ENCODE measurements at regions of chr22 and their contacts with region 1.

Region 1: DNA sequence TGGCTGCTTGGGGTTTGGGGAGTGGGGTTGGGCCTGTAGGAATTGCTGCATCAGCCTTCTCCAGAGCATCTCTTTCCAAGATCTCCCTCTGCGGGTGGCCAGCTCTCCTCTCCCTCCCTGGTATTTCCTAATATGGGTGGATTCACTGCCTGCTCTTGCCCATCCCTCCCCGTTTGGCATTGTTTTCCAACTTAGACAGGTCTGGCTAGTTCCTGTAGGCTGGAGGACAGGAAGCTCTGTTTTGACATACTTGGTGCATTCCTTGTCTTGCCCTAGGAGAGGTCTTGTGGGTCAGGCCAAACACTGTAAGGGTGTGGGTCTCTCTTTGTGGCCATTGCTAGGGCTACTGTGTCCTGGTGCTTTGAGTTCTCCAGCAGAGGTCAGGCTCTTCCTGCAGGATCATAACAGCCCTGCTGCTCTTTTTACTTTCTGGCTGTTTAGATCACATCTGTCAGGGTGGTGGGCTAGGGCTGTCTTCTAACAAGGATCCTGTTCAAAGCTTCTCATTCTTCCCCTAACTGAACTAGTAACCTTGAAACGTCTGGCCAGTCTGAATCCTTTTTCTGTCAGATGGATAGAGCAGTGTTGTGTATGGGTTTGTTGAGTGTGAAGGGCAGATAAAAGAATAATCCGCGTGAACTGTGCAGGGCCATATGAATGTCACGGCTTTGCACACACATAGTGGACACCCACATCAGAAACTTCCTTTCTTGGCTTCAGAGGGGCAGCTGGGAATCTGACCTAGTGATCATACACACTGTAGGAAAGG is 18.3 kb upstream of the MICALL1 start:
- DNase-seq: no peak
- ATAC-seq: peak; percentile 34 to 68 (median 48)
- H3K4me3 ChIP-seq: no peak overlapping the region
- H3K27ac ChIP-seq: no peak overlapping the region
- H3K4me1 ChIP-seq: peaks cover 7 to 12% (median 9%) of the 10 kb centered on the region in 3 donors
- H3K27me3 ChIP-seq: no peaks in the 10 kb centered on the region
- CTCF ChIP-seq: no peak

Region 2: GRCh38 chr22:37734964-37735451 is 152.8 kb before region 1 on chr22:
- intact Hi-C with region 1: no loop called
- DNase-seq: peak in 4 of 6 donors; percentile 51 to 81 (median 65)
- ATAC-seq: peak; percentile 32 to 53 (median 48)
- H3K4me3 ChIP-seq: no peak overlapping the region
- H3K27ac ChIP-seq: no peak overlapping the region
- H3K4me1 ChIP-seq: peaks cover 6 to 13% (median 10%) of the 10 kb centered on the region in 3 donors
- H3K27me3 ChIP-seq: no peaks in the 10 kb centered on the region
- CTCF ChIP-seq: peak in 1 of 4 donors; percentile 33

Region 3: DNA sequence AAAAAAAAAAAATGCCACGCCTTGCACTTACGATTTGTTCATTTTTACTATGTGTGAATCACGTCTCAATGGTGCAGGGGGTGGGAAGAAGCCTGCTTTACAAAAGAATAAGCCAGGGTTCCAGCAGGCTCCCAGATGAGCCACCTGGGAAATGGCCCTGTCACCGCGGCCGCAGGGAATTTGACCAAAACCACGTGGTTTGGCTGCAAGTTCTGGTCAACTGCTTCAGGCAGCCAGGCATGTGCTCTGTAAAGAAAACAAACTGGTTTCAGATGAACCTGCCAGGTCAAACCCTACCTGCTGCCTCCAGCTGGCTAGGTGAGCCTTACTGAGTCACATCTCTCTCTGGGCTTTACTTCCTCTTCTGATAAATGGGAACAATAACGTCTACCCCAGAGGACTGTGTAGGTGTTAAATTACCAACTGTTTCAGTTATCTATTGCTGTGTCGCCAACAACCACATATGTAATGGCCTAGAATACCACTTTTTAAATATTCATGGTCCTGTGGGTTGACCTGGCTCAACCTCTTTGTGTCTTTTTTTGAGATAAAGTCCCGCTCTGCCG is 110.6 kb before region 1 on chr22:
- intact Hi-C with region 1: no loop called
- DNase-seq: peak; percentile 77 to 89 (median 86)
- ATAC-seq: peak; percentile 92 to 95 (median 93)
- H3K4me3 ChIP-seq: no peak overlapping the region
- H3K27ac ChIP-seq: peak overlapping the region; percentile 35 to 59 (median 50)
- H3K4me1 ChIP-seq: peaks cover 0 to 7% (median 4%) of the 10 kb centered on the region in 3 donors
- H3K27me3 ChIP-seq: no peaks in the 10 kb centered on the region
- CTCF ChIP-seq: no peak

Region 4: DNA sequence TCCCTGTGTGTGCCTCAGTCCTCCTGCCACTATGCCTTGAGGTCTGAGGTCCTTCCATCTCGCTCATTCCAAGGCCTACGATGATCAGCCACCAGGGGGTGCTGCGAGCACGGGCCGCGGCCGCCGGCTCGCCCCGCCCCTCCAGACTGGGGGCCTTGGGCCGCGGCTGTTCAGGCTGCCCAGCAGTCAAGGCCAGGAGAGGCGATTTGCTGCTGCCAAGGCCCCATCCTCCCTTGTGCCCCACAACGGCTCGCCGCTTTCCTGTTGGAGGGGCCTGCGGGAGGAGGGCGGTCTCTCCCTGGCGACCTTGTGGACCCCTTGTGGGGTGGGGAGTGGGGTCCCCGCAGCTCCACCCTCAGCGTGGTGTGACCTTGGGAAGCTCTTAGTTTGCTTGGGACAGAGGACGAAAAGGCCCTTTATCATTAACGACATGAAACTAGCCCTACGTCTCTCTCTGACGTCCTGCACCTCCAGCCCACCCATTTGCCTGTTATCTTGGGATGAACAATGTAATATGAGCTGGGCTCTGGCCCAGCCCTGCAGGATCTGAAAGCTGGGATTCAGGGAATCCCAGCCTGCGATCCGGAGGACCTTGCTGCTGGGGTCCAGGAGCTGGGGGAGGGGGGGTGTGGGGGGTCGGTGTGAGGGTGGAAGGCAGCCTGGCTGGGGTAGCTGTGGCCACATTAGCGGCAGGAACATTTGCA is 69.9 kb before region 1 on chr22:
- intact Hi-C with region 1: no loop called
- DNase-seq: peak; percentile 82 to 98 (median 92)
- ATAC-seq: peak; percentile 90 to 96 (median 94)
- H3K4me3 ChIP-seq: peak overlapping the region in 2 of 4 donors; percentile 25 to 44
- H3K27ac ChIP-seq: peak overlapping the region in 1 of 4 donors; percentile 36
- H3K4me1 ChIP-seq: peaks cover 3 to 14% (median 11%) of the 10 kb centered on the region in 3 donors
- H3K27me3 ChIP-seq: no peaks in the 10 kb centered on the region
- CTCF ChIP-seq: peak; percentile 94 to 97 (median 96)

Region 5: DNA sequence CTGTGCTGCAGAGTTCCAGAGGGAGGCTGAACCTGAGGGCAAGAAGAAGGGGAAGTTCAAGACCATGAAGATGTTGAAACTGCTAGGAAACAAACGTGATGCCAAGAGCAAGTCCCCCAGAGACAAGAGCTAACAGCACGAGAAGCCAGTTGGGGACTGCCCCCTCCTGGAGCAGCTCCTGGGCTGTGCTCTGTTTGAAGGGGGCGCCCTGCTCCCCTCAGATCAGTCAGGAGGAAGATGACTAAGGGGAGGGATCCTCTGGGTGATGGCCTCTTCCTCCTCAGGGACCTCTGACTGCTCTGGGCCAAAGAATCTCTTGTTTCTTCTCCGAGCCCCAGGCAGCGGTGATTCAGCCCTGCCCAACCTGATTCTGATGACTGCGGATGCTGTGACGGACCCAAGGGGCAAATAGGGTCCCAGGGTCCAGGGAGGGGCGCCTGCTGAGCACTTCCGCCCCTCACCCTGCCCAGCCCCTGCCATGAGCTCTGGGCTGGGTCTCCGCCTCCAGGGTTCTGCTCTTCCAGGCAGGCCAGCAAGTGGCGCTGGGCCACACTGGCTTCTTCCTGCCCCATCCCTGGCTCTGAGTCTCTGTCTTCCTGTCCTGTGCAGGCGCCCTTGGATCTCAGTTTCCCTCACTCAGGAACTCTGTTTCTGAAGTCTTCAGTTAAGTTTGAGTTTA is 53.0 kb after region 1 on chr22:
- intact Hi-C with region 1: loop called in 1 of 3 experiments (anchors 10 kb)
- DNase-seq: no peak
- ATAC-seq: no peak
- H3K4me3 ChIP-seq: no peak overlapping the region
- H3K27ac ChIP-seq: no peak overlapping the region
- H3K4me1 ChIP-seq: no peaks in the 10 kb centered on the region
- H3K27me3 ChIP-seq: no peaks in the 10 kb centered on the region
- CTCF ChIP-seq: no peak

Measured in pancreas (tissue), 10 donors.